OCI-LY7 (cell line): ENCODE measurements at regions of chr17 and their contacts with region 1.

Region 1: GRCh38 chr17:63399856-63400255 is 46.2 kb downstream of the CYB561 start:
- DNase-seq: no peak
- H3K4me3 ChIP-seq: no peak overlapping the region
- H3K27ac ChIP-seq: no peak overlapping the region
- H3K4me1 ChIP-seq: peaks cover 8% of the 10 kb centered on the region
- CTCF ChIP-seq: no peak

Region 2: GRCh38 chr17:62084585-62084984 is 1315.3 kb before region 1 on chr17:
- CTCF ChIA-PET with region 1: no interaction called
- POLR2A ChIA-PET with region 1: no interaction called
- intact Hi-C with region 1: loop called (anchors 5 kb)
- DNase-seq: no peak
- H3K4me3 ChIP-seq: no peak overlapping the region
- H3K27ac ChIP-seq: no peak overlapping the region
- H3K4me1 ChIP-seq: no peaks in the 10 kb centered on the region
- CTCF ChIP-seq: no peak

Region 3: DNA sequence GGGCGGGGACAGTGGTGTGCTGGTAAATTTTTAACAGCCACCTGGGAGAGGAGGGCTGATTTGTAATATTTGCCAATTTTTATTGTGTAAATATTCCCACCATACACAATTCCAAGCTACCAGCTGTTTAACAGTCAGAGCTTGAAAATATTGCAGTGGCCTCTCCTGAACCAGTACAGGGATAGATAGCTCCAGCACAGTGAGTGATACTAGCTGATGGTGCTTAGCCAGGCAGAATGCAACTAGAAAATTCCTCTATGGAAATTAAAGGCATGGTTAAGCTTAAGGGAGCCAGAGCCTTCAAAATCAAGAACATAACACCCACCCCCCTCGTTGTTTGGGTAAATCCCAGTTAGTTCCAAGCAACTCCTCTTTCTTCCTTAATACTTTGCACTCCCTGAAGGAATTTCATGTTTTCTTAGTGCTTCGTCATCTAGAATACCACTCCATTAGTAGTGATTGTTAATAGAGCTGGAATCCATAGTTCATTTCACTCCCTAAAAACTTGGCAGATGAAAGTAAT is 50.3 kb before region 1 on chr17:
- CTCF ChIA-PET with region 1: no interaction called
- POLR2A ChIA-PET with region 1: no interaction called
- intact Hi-C with region 1: no loop called
- DNase-seq: no peak
- H3K4me3 ChIP-seq: no peak overlapping the region
- H3K27ac ChIP-seq: no peak overlapping the region
- H3K4me1 ChIP-seq: no peaks in the 10 kb centered on the region
- CTCF ChIP-seq: no peak

Region 4: GRCh38 chr17:63378411-63379375 is 21.2 kb before region 1 on chr17:
- CTCF ChIA-PET with region 1: no interaction called
- POLR2A ChIA-PET with region 1: no interaction called
- intact Hi-C with region 1: no loop called
- DNase-seq: no peak
- H3K4me3 ChIP-seq: no peak overlapping the region
- H3K27ac ChIP-seq: no peak overlapping the region
- H3K4me1 ChIP-seq: no peaks in the 10 kb centered on the region
- CTCF ChIP-seq: no peak